Right ventricle myocardium superior (tissue), 1 donor: ENCODE measurements at regions of chr7 and their contacts with region 1.

Region 1: GRCh38 chr7:18666107-18666728 is 170.7 kb downstream of the HDAC9 start:
- DNase-seq: peak; percentile 86
- ATAC-seq: peak; percentile 93

Region 2: DNA sequence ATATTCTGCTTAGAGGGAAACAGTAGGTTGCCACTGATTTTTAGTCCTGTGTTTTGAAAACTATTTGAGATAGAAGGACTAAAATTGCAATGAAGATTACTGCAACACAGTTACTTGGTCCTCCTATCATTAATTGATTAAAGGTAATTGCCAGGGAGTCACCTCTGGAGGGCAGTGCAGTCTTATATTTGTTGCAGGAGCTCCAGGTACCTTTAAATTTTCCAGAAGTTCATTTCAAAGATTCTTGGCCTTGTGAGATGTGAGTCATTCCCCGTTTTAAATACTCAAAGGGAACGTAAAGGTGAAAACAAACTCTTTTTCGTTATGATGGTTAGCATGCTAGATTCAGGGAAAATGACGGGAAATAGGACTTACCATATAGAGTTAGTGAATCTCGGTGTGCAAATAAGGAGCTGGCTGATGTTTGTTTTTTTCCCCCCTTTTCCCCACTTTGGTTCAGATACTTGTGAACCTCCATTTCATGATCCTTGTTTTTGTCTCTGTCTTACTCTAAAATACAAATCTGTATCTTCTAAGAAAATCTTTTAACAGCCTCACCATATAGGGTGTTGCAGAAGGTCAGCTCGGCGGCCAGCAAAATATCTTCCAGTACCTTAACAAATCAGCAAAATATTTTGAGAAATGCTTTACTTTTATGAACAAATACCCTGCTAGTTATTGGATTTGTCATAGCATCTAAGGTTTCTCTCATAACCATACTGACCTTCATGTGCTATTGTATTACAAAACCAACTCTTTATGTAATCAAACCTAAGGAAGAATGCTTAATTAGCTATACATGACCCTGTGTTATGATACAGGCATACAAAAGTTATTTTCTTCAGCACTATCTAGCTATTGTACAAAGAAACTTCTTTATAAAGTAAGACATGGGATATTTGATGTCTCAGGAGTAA is 313.6 kb before region 1 on chr7:
- intact Hi-C with region 1: loop called (anchors 5 kb)
- DNase-seq: no peak
- ATAC-seq: peak; percentile 67

Region 3: DNA sequence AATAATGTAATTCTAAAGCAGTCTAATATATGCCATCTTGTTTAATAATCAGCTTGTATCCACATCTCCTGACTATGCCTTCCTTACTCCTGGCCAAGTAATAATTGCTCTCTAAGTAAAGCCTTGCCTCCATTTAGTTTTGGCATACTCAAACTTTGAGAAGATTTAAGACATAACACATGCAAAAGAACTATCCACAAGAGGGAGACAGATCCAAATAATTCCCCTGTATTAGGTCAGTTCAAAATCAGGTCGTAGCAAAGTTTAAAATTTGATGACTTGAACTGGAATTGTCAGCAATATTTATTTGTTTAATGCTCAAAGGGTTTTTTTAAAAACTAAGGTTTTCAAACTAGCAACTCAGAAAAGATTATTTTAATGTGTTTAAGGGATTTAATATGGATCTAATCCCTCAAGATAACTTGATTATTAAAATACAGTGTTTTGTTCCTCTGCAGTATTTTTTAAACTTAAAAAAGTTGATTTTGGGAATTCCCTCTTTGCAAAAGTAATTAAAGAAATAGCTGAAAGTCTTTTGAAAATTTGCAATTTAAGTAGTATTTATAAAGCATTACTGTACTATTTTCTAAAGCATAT is 75.4 kb before region 1 on chr7:
- intact Hi-C with region 1: loop called (anchors 10 kb)
- DNase-seq: no peak
- ATAC-seq: peak; percentile 58